Activated T-helper 1 cell treated with anti-CD3 and anti-CD28 coated beads, Interleukin-12 subunit alpha, Interleukin-12 subunit beta, Interleukin-2, Interleukin-4 antibody, amounts not matched to agents 30 ng/mL and 10 ng/mL and 1 ng/mL, durations not matched to agents 14 hours and 24 hours and 36 hours (primary cell): ENCODE measurements at regions of chr2 and their contacts with region 1.

Region 1: GRCh38 chr2:37635504-37636380 is 35.7 kb downstream of the CDC42EP3 start:
- DNase-seq: peak; percentile 63
- H3K4me3 Mint-ChIP-seq: peak overlapping the region; percentile 34
- H3K27ac Mint-ChIP-seq: peak overlapping the region; percentile 86
- H3K4me1 Mint-ChIP-seq: peaks cover 37% of the 10 kb centered on the region
- H3K27me3 Mint-ChIP-seq: peaks cover 18% of the 10 kb centered on the region

Region 2: DNA sequence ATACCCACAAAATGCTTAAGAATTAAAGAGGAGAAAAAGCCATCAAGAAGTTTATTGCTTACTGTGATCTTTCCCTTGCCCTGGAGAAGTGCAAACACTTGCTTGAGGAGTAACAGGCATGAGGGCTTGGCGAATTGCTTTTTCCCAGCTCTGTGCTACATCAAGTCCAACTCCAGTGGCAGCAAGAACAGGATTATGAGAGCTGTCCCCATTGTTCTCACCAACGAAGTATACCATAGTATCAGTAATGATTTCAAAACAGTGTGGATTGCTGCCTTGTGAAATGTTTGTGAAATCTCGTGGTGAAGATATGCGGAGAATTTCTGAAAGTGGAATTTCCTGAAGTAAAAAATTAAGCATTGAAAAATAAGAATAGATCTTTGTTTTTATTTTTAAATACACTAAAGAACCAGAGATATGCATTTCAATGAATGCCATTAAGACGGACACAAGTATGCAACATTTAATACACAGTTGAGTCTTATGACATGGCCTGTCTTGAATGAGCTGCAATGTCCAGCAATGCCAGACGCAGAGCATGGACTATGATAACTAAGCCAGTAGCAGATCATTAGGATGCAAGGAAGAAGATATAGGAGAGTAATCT is 361.3 kb before region 1 on chr2:
- intact Hi-C with region 1: no loop called
- DNase-seq: no peak
- H3K4me3 Mint-ChIP-seq: no peak overlapping the region
- H3K27ac Mint-ChIP-seq: no peak overlapping the region
- H3K4me1 Mint-ChIP-seq: no peaks in the 10 kb centered on the region
- H3K27me3 Mint-ChIP-seq: no peaks in the 10 kb centered on the region

Region 3: GRCh38 chr2:37365669-37366068 is 270.1 kb before region 1 on chr2:
- intact Hi-C with region 1: loop called (anchors 2 kb)
- DNase-seq: no peak
- H3K4me3 Mint-ChIP-seq: no peak overlapping the region
- H3K27ac Mint-ChIP-seq: no peak overlapping the region
- H3K4me1 Mint-ChIP-seq: no peaks in the 10 kb centered on the region
- H3K27me3 Mint-ChIP-seq: peaks cover 31% of the 10 kb centered on the region

Region 4: DNA sequence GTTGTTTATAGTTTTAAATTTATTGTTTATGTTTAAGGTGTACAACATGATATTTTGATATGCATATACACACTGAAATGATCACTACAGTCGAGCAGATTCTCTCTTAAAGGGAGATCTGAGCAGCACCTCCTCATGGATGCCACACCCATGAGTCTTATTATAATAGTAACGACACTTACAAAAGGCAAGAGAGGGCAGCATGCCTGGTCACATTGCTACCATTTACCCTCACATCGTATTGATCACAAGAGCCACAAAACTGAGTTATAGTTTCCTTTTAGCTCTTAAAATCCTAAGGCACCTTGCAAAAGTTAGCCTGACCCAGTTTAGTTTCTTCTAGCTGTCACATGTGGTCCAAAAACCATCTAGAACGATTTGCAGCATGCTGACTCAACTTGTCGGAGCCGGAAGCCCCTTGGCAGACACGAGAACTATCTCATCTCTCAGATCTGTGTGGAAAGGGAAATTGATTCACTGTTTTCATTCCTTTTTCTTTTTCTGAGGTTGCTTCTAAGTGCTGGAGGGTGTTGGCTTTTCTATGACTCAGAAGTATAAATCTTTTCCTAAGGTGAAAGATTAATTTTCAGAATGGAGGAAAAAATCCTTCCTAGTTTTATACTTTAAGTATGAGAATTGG is 49.6 kb before region 1 on chr2:
- intact Hi-C with region 1: loop called (anchors 1 kb)
- DNase-seq: peak; percentile 62
- H3K4me3 Mint-ChIP-seq: peak overlapping the region; percentile 56
- H3K27ac Mint-ChIP-seq: peak overlapping the region; percentile 50
- H3K4me1 Mint-ChIP-seq: peaks cover 71% of the 10 kb centered on the region
- H3K27me3 Mint-ChIP-seq: peaks cover 2% of the 10 kb centered on the region

Region 5: DNA sequence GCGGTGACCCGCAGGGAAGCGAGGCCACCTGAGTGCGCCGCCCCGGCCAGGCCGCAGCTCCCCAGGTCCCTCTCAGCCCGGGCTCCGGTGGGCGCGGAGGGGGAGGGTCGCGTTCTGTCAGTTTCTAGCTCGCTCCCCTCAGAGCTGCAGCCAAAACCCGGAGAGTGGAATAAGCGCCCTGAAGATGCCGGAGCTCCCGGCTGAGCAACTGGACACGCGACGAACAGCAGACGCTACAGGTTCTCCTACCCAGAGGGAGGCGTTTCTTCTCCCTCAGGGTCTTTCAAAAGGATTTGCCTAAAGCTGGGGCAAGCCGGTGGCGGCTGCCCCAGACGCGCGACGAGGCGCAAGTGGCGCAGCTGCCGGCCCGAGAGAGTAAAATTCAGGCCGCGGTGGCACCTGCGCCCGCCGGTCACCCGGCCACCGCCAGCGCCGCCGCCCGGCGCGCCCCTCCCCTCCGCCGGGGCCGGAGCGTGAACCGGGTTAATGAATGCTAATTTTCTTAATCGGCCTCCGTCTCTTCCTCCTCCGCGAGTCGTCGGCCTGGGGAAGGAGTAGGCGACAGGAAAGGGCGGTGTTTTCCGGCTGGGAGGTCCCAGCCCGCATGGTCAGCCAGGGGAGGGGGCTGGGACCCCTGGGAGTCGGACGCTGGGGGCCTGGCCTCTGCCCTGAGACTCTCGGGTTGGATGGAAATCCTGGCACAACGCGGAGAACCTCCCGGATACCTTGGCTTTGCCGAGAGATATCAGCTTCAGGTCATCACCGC is 36.5 kb after region 1 on chr2:
- intact Hi-C with region 1: loop called (anchors 1 kb)
- DNase-seq: peak; percentile 59
- H3K4me3 Mint-ChIP-seq: peak overlapping the region; percentile 83
- H3K27ac Mint-ChIP-seq: peak overlapping the region; percentile 67
- H3K4me1 Mint-ChIP-seq: peaks cover 38% of the 10 kb centered on the region
- H3K27me3 Mint-ChIP-seq: peaks cover 8% of the 10 kb centered on the region

Region 6: GRCh38 chr2:37711308-37711731 is 75.6 kb after region 1 on chr2:
- intact Hi-C with region 1: loop called (anchors 1 kb)
- DNase-seq: peak; percentile 30
- H3K4me3 Mint-ChIP-seq: no peak overlapping the region
- H3K27ac Mint-ChIP-seq: no peak overlapping the region
- H3K4me1 Mint-ChIP-seq: peaks cover 44% of the 10 kb centered on the region
- H3K27me3 Mint-ChIP-seq: peaks cover 4% of the 10 kb centered on the region

Region 7: DNA sequence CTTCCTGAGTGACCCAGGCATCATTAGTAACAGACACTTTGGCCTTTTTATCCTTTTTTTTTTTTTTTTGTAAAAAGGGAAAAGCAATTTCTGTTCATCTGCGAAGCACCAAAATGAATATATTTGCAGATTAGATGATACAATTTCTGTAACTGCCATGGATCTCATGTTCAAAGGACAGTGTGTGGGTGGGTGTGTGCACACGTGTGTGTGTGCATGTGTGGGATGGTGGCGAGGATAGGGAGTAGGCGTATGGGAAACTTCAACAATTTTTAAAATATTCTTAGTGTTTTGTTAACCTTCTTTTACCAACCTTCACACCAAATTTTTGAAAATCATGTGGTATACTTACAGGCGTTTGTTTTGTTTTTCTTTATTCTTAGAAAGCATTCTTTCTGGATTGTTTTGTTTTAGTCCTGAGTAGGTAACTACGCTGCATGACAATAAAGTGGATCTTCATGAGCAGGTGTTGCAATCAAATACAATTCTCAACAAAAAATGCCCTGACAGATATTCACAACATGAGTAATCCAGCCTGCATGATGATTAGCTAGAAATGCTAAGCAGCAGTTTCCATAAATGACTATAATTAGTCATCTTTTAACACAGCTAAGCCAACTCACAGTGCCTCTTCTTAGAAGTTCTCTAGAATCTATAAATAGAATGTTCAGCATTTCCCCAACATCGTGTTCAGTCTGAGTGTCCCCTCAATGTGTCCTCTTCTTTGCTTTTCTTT is 235.9 kb after region 1 on chr2:
- intact Hi-C with region 1: loop called (anchors 1 kb)
- DNase-seq: no peak
- H3K4me3 Mint-ChIP-seq: peak overlapping the region; percentile 83
- H3K27ac Mint-ChIP-seq: peak overlapping the region; percentile 100
- H3K4me1 Mint-ChIP-seq: peaks cover 51% of the 10 kb centered on the region
- H3K27me3 Mint-ChIP-seq: peaks cover 22% of the 10 kb centered on the region